CD4-positive, alpha-beta T cell (primary cell): ENCODE measurements at regions of chr12 and their contacts with region 1.

Region 1: GRCh38 chr12:113174461-113175384 is 10.6 kb downstream of the DDX54 start:
- DNase-seq: peak; percentile 67 to 84 (median 73)
- ATAC-seq: peak; percentile 87
- H3K4me3 ChIP-seq: no peak overlapping the region
- H3K4me3 Mint-ChIP-seq: no peak overlapping the region
- H3K27ac ChIP-seq: no peak overlapping the region
- H3K27ac Mint-ChIP-seq: no peak overlapping the region
- H3K4me1 ChIP-seq: no peaks in the 10 kb centered on the region
- H3K4me1 Mint-ChIP-seq: no peaks in the 10 kb centered on the region
- H3K27me3 ChIP-seq: no peaks in the 10 kb centered on the region
- H3K27me3 Mint-ChIP-seq: no peaks in the 10 kb centered on the region
- CTCF ChIP-seq: peak; percentile 100

Region 2: DNA sequence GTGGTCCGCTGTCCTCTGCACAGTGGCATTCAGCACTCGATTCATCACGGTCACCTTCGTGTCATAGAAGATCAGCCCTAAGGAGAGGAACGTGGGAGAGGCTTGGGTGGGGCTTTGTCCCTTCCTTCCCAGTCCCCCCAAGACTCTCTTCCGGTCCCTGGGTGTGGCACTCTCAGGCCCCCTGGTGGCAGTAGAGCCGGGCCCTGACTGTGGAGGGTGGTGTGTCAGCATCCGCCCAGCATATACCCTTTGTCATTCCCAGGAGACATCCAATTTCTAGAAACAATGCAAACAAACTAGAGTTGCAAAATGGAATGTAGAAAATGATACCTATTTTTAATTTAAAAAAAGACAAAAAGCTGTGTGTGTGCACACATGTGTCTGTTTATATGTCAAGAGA is 1004.3 kb before region 1 on chr12:
- CTCF ChIA-PET with region 1: no interaction called
- POLR2A ChIA-PET with region 1: no interaction called
- intact Hi-C with region 1: no loop called
- DNase-seq: peak in 8 of 14 experiments; percentile 10 to 50 (median 26)
- ATAC-seq: no peak
- H3K4me3 ChIP-seq: no peak overlapping the region
- H3K4me3 Mint-ChIP-seq: no peak overlapping the region
- H3K27ac ChIP-seq: no peak overlapping the region
- H3K27ac Mint-ChIP-seq: no peak overlapping the region
- H3K4me1 ChIP-seq: no peaks in the 10 kb centered on the region
- H3K4me1 Mint-ChIP-seq: no peaks in the 10 kb centered on the region
- H3K27me3 ChIP-seq: no peaks in the 10 kb centered on the region
- H3K27me3 Mint-ChIP-seq: no peaks in the 10 kb centered on the region
- CTCF ChIP-seq: peak; percentile 35

Region 3: DNA sequence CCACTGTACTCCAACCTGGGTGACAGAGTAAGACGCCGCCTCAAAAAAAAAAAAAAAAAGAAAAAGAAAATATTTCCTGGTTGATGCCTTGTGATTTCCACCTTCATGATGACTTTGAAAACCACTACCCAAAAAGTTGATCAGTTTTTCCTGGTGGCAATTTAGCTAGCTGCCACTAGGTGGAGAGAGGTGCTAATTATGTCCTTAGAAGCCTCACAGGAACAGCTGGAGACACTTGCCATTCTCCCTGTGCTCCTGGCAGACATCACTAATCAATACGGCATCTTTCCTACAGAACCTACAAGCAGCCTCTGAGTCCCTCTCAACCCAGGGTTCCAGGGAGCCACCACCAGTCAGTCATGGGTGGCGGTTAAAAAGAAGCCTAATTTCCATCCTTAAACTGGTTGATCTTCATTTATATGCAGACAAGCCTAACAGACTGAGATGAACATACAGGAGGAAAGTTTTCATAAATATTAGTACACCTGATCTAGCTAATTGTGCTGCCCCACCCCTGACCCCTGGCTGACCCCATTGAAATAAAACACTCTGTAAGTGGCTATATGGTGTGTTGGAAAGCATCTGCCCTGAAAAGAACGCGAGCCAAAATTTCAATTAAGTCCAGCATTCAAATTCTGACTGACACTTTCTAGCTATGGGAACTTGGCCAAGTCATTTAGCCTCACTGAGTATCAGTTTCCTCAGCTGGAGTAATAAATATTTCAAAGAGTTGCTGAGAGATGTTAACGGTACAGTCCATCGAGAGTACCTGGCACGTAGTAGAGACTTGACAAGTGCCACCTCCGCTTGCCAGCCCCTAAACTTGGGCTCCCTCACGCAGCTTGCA is 274.2 kb before region 1 on chr12:
- CTCF ChIA-PET with region 1: no interaction called
- POLR2A ChIA-PET with region 1: no interaction called
- intact Hi-C with region 1: loop called in 1 of 2 experiments (anchors 5 kb)
- DNase-seq: peak in 9 of 14 experiments; percentile 9 to 72 (median 42)
- ATAC-seq: peak; percentile 56
- H3K4me3 ChIP-seq: no peak overlapping the region
- H3K4me3 Mint-ChIP-seq: peak overlapping the region; percentile 22
- H3K27ac ChIP-seq: no peak overlapping the region
- H3K27ac Mint-ChIP-seq: peak overlapping the region; percentile 71
- H3K4me1 ChIP-seq: peaks cover 16% of the 10 kb centered on the region
- H3K4me1 Mint-ChIP-seq: peaks cover 44% of the 10 kb centered on the region
- H3K27me3 ChIP-seq: peaks cover 0 to 2% of the 10 kb centered on the region in 2 experiments
- H3K27me3 Mint-ChIP-seq: peaks cover 6% of the 10 kb centered on the region
- CTCF ChIP-seq: peak; percentile 90

Region 4: GRCh38 chr12:112992541-112993398 is 182.0 kb before region 1 on chr12:
- CTCF ChIA-PET with region 1: interaction called, 8 read pairs
- POLR2A ChIA-PET with region 1: no interaction called
- intact Hi-C with region 1: loop called (anchors 2 to 5 kb)
- DNase-seq: peak; percentile 16 to 76 (median 56)
- ATAC-seq: peak; percentile 87
- H3K4me3 ChIP-seq: no peak overlapping the region
- H3K4me3 Mint-ChIP-seq: no peak overlapping the region
- H3K27ac ChIP-seq: no peak overlapping the region
- H3K27ac Mint-ChIP-seq: peak overlapping the region; percentile 7
- H3K4me1 ChIP-seq: peaks cover 6% of the 10 kb centered on the region
- H3K4me1 Mint-ChIP-seq: peaks cover 25% of the 10 kb centered on the region
- H3K27me3 ChIP-seq: no peaks in the 10 kb centered on the region
- H3K27me3 Mint-ChIP-seq: no peaks in the 10 kb centered on the region
- CTCF ChIP-seq: peak; percentile 74

Region 5: GRCh38 chr12:113048716-113049127 is 126.0 kb before region 1 on chr12:
- CTCF ChIA-PET with region 1: interaction called, 21 read pairs
- POLR2A ChIA-PET with region 1: no interaction called
- intact Hi-C with region 1: loop called (anchors 1 kb)
- DNase-seq: peak; percentile 33 to 84 (median 52)
- ATAC-seq: peak; percentile 85
- H3K4me3 ChIP-seq: no peak overlapping the region
- H3K4me3 Mint-ChIP-seq: peak overlapping the region; percentile 51
- H3K27ac ChIP-seq: no peak overlapping the region
- H3K27ac Mint-ChIP-seq: no peak overlapping the region
- H3K4me1 ChIP-seq: peaks cover 14% of the 10 kb centered on the region
- H3K4me1 Mint-ChIP-seq: peaks cover 51% of the 10 kb centered on the region
- H3K27me3 ChIP-seq: no peaks in the 10 kb centered on the region
- H3K27me3 Mint-ChIP-seq: no peaks in the 10 kb centered on the region
- CTCF ChIP-seq: peak; percentile 75

Region 6: GRCh38 chr12:113109872-113110599 is 64.7 kb before region 1 on chr12:
- CTCF ChIA-PET with region 1: no interaction called
- POLR2A ChIA-PET with region 1: interaction called, 3 read pairs
- intact Hi-C with region 1: loop called in 1 of 2 experiments (anchors 5 kb)
- DNase-seq: peak in 1 of 14 experiments; percentile 19
- ATAC-seq: peak; percentile 41
- H3K4me3 ChIP-seq: no peak overlapping the region
- H3K4me3 Mint-ChIP-seq: no peak overlapping the region
- H3K27ac ChIP-seq: no peak overlapping the region
- H3K27ac Mint-ChIP-seq: peak overlapping the region; percentile 24
- H3K4me1 ChIP-seq: peaks cover 14% of the 10 kb centered on the region
- H3K4me1 Mint-ChIP-seq: peaks cover 11% of the 10 kb centered on the region
- H3K27me3 ChIP-seq: no peaks in the 10 kb centered on the region
- H3K27me3 Mint-ChIP-seq: no peaks in the 10 kb centered on the region
- CTCF ChIP-seq: no peak

Region 7: DNA sequence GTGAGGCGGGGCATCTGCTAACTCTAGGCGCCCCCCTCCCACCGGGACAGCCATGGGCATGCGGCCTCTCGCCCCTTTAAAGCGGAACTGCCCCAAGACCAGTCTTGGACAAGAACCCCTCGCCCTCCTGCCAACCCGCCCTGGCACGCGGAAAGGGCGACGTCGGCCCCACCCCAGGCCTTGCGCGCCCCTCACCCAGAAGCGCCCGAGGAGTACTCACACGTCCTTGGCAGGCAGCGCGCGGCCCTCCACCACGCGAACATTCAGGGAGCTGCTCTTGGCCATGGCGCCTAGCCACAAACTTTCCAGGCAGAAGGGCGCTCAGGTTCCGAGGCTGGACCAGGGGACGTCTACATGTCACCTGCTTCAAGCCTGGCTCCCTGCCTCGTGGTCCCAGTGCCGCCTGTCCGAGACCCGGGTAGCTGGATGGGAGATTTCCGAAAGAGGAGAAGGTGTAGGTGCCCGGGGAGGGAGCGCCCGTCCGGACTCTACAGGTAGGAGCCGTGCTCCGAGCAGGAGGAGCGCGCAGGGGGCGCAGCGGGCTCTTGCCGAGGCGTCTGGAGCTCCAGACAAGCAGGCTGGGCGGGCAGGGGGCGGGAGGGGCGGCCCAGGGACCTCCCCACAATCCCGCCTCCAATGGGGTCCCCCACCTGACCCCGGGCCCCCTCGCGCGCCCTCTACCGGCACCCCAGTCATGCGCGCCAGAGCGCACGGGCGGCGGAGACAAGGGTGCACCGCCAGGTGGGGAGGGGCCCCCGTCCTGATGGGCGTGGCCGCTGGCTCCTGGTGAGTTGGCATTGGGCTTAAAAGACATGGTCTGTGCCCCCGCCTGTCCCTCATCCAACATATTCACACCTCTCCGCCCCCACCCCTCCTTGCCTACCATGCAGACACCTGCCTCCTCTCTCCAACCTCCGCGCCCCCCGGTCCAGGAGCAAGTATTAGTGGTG is 39.3 kb before region 1 on chr12 and contains the start of gene RASAL1:
- CTCF ChIA-PET with region 1: interaction called, 4 read pairs
- POLR2A ChIA-PET with region 1: no interaction called
- intact Hi-C with region 1: loop called in 1 of 2 experiments (anchors 5 kb)
- DNase-seq: peak; percentile 58 to 85 (median 76)
- ATAC-seq: peak; percentile 88
- H3K4me3 ChIP-seq: peak within 1 kb of the TSS; percentile 51
- H3K4me3 Mint-ChIP-seq: peak within 1 kb of the TSS; percentile 92
- H3K27ac ChIP-seq: peak within 1 kb of the TSS in 1 of 2 donors; percentile 61
- H3K27ac Mint-ChIP-seq: peak within 1 kb of the TSS; percentile 98
- H3K4me1 ChIP-seq: peaks cover 22% of the 10 kb centered on the region
- H3K4me1 Mint-ChIP-seq: peaks cover 13% of the 10 kb centered on the region
- H3K27me3 ChIP-seq: no peaks in the 10 kb centered on the region
- H3K27me3 Mint-ChIP-seq: no peaks in the 10 kb centered on the region
- CTCF ChIP-seq: peak; percentile 61
- total RNA-seq, gene RASAL1: 1.2 to 2.7 TPM

Region 8: GRCh38 chr12:113164014-113164413 is 10.7 kb before region 1 on chr12:
- CTCF ChIA-PET with region 1: no interaction called
- POLR2A ChIA-PET with region 1: no interaction called
- intact Hi-C with region 1: no loop called
- DNase-seq: no peak
- ATAC-seq: no peak
- H3K4me3 ChIP-seq: no peak overlapping the region
- H3K4me3 Mint-ChIP-seq: no peak overlapping the region
- H3K27ac ChIP-seq: no peak overlapping the region
- H3K27ac Mint-ChIP-seq: no peak overlapping the region
- H3K4me1 ChIP-seq: no peaks in the 10 kb centered on the region
- H3K4me1 Mint-ChIP-seq: no peaks in the 10 kb centered on the region
- H3K27me3 ChIP-seq: no peaks in the 10 kb centered on the region
- H3K27me3 Mint-ChIP-seq: no peaks in the 10 kb centered on the region
- CTCF ChIP-seq: no peak

Region 9: GRCh38 chr12:113378291-113378690 is 203.6 kb after region 1 on chr12:
- CTCF ChIA-PET with region 1: no interaction called
- POLR2A ChIA-PET with region 1: no interaction called
- intact Hi-C with region 1: no loop called
- DNase-seq: no peak
- ATAC-seq: no peak
- H3K4me3 ChIP-seq: no peak overlapping the region
- H3K4me3 Mint-ChIP-seq: no peak overlapping the region
- H3K27ac ChIP-seq: no peak overlapping the region
- H3K27ac Mint-ChIP-seq: no peak overlapping the region
- H3K4me1 ChIP-seq: no peaks in the 10 kb centered on the region
- H3K4me1 Mint-ChIP-seq: no peaks in the 10 kb centered on the region
- H3K27me3 ChIP-seq: no peaks in the 10 kb centered on the region
- H3K27me3 Mint-ChIP-seq: no peaks in the 10 kb centered on the region
- CTCF ChIP-seq: no peak

Region 10: GRCh38 chr12:114999812-115000437 is 1825.2 kb after region 1 on chr12:
- CTCF ChIA-PET with region 1: no interaction called
- POLR2A ChIA-PET with region 1: no interaction called
- intact Hi-C with region 1: no loop called
- DNase-seq: no peak
- ATAC-seq: no peak
- H3K4me3 ChIP-seq: no peak overlapping the region
- H3K4me3 Mint-ChIP-seq: no peak overlapping the region
- H3K27ac ChIP-seq: no peak overlapping the region
- H3K27ac Mint-ChIP-seq: no peak overlapping the region
- H3K4me1 ChIP-seq: no peaks in the 10 kb centered on the region
- H3K4me1 Mint-ChIP-seq: no peaks in the 10 kb centered on the region
- H3K27me3 ChIP-seq: no peaks in the 10 kb centered on the region
- H3K27me3 Mint-ChIP-seq: peaks cover 13% of the 10 kb centered on the region
- CTCF ChIP-seq: no peak